MCF 10A (cell line): ENCODE measurements at regions of chr15 and their contacts with region 1.

Region 1: DNA sequence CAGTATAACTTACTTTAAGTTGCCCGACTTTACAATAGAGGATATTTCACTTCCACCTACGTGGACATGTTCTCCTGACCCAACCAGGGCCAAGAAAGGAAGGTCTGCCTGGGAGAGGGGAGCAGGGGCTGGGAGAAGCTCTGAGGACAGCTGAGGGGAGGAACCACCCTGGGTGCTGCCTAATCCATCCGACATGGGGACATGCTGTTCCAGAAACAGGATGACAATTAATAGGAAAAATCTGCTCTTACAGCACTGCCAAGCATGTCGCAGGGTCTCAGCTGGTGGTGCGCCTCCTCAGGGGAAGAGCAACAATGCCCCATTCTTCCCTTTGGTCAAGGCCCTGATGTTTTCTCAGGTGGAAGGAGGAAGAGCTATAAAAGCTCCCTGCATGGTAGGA is 132.3 kb downstream of the NTRK3 start:
- DNase-seq: no peak
- H3K4me3 Mint-ChIP-seq: no peak overlapping the region
- H3K27ac Mint-ChIP-seq: no peak overlapping the region
- H3K4me1 Mint-ChIP-seq: no peaks in the 10 kb centered on the region
- H3K27me3 Mint-ChIP-seq: no peaks in the 10 kb centered on the region
- CTCF ChIP-seq: no peak

Region 2: DNA sequence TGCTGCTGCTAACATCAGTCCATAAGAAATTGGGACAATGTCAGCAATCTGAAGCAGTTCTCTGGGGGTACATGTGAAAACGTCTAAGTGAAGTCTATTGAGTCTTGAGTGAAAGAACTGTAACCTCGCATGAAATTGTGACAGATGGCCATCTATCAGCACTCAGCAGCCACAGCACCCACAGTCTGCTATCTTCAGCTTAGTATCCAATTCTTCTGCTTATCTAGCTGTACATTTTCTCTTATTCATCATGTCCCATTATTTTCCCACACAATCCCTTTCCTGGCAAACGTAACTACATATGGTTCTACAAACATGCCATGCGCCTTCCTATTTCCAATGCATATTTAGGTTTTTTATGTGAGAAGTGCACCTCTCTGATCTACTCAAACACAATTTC is 497.3 kb before region 1 on chr15:
- CTCF ChIA-PET with region 1: no interaction called
- POLR2A ChIA-PET with region 1: no interaction called
- intact Hi-C with region 1: loop called (anchors 5 kb)
- DNase-seq: no peak
- H3K4me3 Mint-ChIP-seq: no peak overlapping the region
- H3K27ac Mint-ChIP-seq: no peak overlapping the region
- H3K4me1 Mint-ChIP-seq: no peaks in the 10 kb centered on the region
- H3K27me3 Mint-ChIP-seq: no peaks in the 10 kb centered on the region
- CTCF ChIP-seq: no peak

Region 3: DNA sequence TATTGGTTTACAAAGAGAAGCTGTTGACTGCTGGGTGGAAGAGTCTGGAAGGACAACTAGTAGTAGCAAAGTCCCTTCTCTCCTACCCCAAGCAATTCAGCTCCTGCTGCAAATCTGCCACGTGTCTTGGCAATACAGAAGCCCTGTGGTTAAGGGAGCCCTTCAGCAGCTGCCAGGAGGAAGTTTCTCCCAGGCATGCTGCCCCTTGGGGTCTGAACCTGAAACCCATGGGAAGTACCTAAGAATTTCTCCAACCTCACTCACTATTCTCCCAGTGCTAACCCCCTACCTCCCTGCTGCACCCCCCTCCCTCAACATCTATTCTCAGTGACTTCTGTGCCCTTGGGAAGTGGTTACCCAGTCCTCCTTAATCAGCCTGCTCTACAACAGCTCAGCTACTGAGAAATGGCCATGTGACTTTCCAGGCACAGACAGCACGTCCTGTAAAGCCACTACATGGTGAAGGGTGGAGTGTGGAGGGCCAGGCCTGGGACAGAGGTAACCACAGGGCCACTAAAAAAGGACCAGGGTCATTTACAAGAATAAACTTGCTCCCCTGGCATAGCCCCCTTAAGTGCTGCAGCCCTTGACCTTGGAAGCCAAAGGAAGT is 184.2 kb before region 1 on chr15:
- CTCF ChIA-PET with region 1: no interaction called
- POLR2A ChIA-PET with region 1: no interaction called
- intact Hi-C with region 1: no loop called
- DNase-seq: no peak
- H3K4me3 Mint-ChIP-seq: no peak overlapping the region
- H3K27ac Mint-ChIP-seq: no peak overlapping the region
- H3K4me1 Mint-ChIP-seq: no peaks in the 10 kb centered on the region
- H3K27me3 Mint-ChIP-seq: no peaks in the 10 kb centered on the region
- CTCF ChIP-seq: no peak

Region 4: DNA sequence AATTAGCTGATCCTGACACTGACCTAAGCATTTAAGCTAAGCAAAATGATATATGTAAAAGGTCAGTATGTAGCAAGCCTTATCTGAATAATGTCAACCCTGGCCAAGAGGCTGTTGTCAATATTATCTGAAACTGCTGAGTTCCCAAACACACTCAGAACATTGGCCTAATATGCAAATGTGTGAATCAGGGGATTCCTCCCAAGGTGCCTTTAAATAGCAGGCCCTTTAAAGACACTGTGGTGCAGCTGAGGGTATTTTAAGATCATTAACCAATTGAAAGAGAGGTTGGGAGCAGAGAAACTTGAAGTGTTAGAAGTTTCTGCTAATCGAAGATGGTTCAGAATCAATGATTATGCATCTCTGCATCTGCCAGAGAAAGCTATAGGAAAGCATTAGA is 74.7 kb before region 1 on chr15:
- CTCF ChIA-PET with region 1: no interaction called
- POLR2A ChIA-PET with region 1: no interaction called
- intact Hi-C with region 1: no loop called
- DNase-seq: no peak
- H3K4me3 Mint-ChIP-seq: no peak overlapping the region
- H3K27ac Mint-ChIP-seq: no peak overlapping the region
- H3K4me1 Mint-ChIP-seq: no peaks in the 10 kb centered on the region
- H3K27me3 Mint-ChIP-seq: no peaks in the 10 kb centered on the region
- CTCF ChIP-seq: no peak